Activated CD8-positive, alpha-beta memory T cell treated with anti-CD3 and anti-CD28 coated beads, Interleukin-2, amount 10 ng/mL, durations not matched to agents 7 days and 5 days (primary cell): ENCODE measurements at regions of chr3 and their contacts with region 1.

Region 1: DNA sequence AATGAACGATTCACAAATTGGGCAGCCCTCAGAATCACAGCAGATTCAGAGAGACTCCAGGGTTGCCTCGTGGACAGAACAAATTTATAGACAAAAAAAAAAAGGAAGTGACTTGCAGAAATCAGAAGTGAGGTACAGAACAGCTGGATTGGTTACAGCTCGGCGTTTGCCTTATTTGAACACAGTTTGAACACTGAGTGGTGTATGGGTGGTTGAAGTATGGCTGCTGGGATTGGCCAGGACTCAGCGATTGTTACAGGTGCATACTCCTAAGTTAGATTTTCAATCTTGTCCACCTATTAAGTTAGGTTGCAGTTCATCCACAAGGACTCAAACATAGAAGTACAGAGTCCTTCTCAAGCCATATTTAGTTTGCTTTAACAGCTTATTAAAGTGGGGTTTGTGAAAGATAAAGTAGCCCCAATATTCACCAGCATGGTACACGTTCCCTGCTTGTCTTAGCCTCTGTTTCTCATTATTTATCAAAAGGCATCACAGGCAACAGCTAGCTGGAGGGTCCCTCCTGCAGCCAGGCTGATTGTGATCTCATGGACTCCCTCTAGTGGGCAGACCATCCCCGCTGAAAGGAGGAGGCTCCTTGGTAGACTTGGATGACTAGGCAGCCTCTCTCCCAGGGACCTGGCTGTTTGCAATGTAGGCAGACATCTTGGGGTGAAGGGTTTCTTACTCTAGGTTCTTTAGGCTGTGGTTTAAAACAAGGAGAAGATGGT is 17.6 kb upstream of the ALDH1L1 start:
- DNase-seq: peak; percentile 67
- ATAC-seq: peak; percentile 65
- H3K4me3 Mint-ChIP-seq: no peak overlapping the region
- H3K27ac Mint-ChIP-seq: no peak overlapping the region
- H3K4me1 Mint-ChIP-seq: no peaks in the 10 kb centered on the region
- H3K27me3 Mint-ChIP-seq: peaks cover 31% of the 10 kb centered on the region

Region 2: DNA sequence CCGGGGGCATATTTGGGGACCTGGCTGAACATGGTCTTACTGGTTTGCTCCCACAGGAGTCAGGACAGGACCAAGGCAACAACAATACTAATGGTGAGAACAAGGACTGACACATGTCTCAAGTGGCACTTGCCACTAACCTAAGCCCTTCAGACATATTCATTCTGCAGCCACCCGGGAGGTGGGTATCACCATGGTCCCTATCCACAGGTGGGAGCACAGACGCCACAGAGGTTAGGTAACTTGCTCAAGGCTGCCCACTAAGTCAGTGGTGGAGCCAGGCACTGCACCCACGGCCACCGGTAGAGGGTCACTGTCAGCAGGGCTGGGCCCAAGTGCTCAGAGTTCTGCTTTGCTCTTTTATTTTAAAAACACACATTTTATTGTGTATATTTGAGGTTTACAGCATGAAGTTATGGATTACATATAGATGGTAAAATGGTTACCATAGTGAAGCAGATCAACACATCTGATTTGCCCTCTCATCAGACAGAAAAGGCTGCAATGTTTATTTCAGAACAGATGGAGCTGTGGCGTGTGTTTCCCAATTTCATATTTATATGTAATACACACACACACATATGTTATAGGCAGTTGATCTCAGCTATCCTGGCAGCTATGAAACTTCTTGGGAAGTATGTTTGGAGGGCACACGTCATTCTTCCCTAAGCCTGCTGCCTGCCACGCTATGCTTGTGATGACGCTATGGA is 84.1 kb before region 1 on chr3:
- CTCF ChIA-PET with region 1: no interaction called
- DNase-seq: no peak
- ATAC-seq: peak; percentile 61
- H3K4me3 Mint-ChIP-seq: no peak overlapping the region
- H3K27ac Mint-ChIP-seq: no peak overlapping the region
- H3K4me1 Mint-ChIP-seq: no peaks in the 10 kb centered on the region
- H3K27me3 Mint-ChIP-seq: no peaks in the 10 kb centered on the region

Region 3: GRCh38 chr3:126134219-126134975 is 63.6 kb before region 1 on chr3:
- CTCF ChIA-PET with region 1: interaction called, 13 read pairs
- DNase-seq: peak; percentile 61
- ATAC-seq: peak; percentile 67
- H3K4me3 Mint-ChIP-seq: no peak overlapping the region
- H3K27ac Mint-ChIP-seq: no peak overlapping the region
- H3K4me1 Mint-ChIP-seq: no peaks in the 10 kb centered on the region
- H3K27me3 Mint-ChIP-seq: peaks cover 11% of the 10 kb centered on the region